ENCODE measurements at regions of chr7 and their contacts with region 1.

Region 1: GRCh38 chr7:85829817-85830432 is 643.1 kb upstream of the SEMA3D start:
- DNase-seq: no peak
- H3K4me3 Mint-ChIP-seq: no peak overlapping the region
- H3K27ac Mint-ChIP-seq: no peak overlapping the region
- H3K4me1 Mint-ChIP-seq: no peaks in the 10 kb centered on the region
- H3K27me3 Mint-ChIP-seq: no peaks in the 10 kb centered on the region
- CTCF ChIP-seq: no peak

Region 2: GRCh38 chr7:85030893-85031292 is 799.0 kb before region 1 on chr7:
- CTCF ChIA-PET with region 1: interaction called, 4 read pairs
- intact Hi-C with region 1: loop called (anchors 1 kb)
- DNase-seq: no peak
- H3K4me3 Mint-ChIP-seq: no peak overlapping the region
- H3K27ac Mint-ChIP-seq: no peak overlapping the region
- H3K4me1 Mint-ChIP-seq: no peaks in the 10 kb centered on the region
- H3K27me3 Mint-ChIP-seq: no peaks in the 10 kb centered on the region
- CTCF ChIP-seq: no peak

Region 3: DNA sequence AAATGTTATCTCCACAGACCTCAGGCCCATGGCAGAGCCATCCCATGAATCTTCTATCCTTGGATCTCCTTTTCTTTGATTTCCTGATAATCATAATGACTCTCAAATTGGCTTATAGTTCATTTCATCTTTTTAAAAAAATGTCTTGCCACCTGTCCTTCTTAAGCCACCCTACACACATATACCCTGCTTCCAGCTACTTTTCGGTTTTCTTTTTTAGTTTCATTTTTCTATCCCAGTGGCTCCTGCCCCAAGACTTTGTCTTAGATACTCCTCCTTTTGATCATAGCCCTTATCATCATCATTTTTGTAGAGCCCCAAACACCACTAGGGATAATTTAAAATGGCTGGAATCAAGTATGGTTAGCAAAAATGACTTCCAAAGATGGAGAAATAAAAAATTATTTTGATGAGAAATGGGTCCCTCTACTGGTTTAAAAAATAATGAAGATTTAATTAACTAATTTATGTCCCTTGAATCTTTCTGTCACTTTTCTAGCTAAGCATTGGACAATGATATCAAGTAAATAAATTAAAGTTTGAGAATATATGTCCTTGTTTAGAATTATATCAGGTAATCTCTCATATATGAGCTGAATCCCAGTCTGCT is 365.8 kb before region 1 on chr7:
- CTCF ChIA-PET with region 1: interaction called, 5 read pairs
- intact Hi-C with region 1: loop called (anchors 10 kb)
- DNase-seq: no peak
- H3K4me3 Mint-ChIP-seq: no peak overlapping the region
- H3K27ac Mint-ChIP-seq: no peak overlapping the region
- H3K4me1 Mint-ChIP-seq: peaks cover 14% of the 10 kb centered on the region
- H3K27me3 Mint-ChIP-seq: no peaks in the 10 kb centered on the region
- CTCF ChIP-seq: no peak

Region 4: GRCh38 chr7:85554236-85555178 is 275.4 kb before region 1 on chr7:
- CTCF ChIA-PET with region 1: interaction called, 4 read pairs
- intact Hi-C with region 1: loop called (anchors 5 kb)
- DNase-seq: peak; percentile 34
- H3K4me3 Mint-ChIP-seq: no peak overlapping the region
- H3K27ac Mint-ChIP-seq: peak overlapping the region; percentile 36
- H3K4me1 Mint-ChIP-seq: peaks cover 23% of the 10 kb centered on the region
- H3K27me3 Mint-ChIP-seq: no peaks in the 10 kb centered on the region
- CTCF ChIP-seq: no peak